ENCODE measurements at regions of chr1 and their contacts with region 1.

Region 1: DNA sequence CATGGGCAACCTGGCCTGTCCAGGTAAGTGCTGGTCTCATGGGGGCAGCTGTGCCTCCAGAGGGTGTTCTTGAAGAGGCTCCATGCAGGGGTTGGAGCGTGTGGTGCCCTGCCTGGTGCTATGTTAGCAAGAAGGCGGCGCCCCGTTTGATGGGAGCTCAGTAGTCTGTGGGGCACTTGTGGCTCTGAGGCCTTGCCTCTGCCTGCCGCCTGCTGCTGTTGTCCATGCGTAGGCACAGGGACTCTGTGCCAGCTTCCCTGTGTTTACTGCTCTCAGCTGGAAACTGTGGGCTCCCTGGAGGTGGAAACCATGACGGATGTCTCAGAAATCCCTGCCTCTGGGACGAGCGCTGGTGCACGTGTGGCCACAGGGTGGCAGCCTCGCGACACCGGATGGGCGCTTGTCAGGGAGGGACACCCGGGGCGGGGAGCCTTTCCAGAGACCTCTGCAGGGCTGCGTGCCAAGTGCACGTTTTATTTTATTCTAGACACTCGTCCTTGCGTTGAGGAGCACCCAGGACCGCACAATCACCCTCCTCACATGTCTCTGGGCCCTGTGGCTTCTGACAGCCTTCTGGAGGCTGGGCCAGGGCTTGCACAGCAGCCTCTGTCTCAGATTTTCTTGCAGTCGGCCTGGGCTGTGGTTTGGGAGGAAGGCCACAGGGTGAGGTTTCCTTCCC is 27.1 kb downstream of the SNAP47 start:
- DNase-seq: peak; percentile 96
- H3K4me3 Mint-ChIP-seq: peak overlapping the region; percentile 62
- H3K27ac Mint-ChIP-seq: peak overlapping the region; percentile 71
- H3K4me1 Mint-ChIP-seq: peaks cover 81% of the 10 kb centered on the region
- H3K27me3 Mint-ChIP-seq: no peaks in the 10 kb centered on the region

Region 2: DNA sequence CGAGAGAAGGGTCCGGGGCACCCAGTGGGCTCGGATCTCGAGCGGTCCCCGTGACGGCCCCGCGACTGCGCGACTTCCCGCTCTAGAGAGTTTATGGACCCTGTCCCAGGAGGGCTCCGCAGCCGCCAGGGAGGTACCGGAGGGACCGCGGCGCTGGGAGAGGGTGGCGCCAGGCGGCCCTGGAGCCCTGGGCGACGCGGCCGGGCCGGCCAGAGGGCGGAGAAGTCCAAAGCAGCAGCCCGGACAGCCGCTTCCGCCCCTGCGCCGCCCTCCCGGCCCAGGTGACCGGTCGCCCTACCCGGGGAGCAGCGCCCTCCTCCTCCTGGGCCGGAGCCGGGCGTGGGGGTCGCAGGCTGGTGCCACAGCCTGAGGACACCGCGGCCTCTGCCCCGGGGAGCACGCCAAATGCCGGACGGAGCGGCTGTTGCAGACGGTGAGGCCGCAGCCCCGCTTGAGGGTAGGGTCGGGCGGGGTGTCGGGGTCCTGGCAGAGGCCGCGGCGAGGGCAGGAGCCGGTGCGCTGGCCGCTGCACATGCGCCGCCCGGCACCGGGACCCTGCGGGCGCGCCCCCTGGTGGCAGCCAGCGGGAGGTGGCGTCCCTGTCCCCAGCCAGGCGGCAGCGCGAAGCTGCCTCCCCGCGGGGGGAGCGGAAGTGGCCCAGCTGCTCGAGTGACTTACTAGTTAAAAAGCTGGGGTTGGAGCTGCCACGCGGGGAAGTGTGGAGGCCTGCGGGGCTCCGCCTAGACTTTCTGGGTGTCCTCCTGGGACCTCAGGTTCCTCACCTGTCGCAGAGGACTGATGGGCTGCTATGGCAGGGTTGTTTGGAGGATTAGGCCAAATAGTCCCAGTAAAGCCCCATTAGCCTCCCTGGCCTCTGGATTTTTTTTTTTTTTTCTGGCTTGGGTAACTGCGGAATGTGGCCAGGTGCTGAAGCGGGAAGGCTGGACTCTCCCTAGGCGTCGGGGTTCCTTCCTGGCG is 219.9 kb before region 1 on chr1:
- intact Hi-C with region 1: no loop called
- DNase-seq: peak; percentile 97
- H3K4me3 Mint-ChIP-seq: peak overlapping the region; percentile 48
- H3K27ac Mint-ChIP-seq: peak overlapping the region; percentile 67
- H3K4me1 Mint-ChIP-seq: peaks cover 5% of the 10 kb centered on the region
- H3K27me3 Mint-ChIP-seq: peaks cover 5% of the 10 kb centered on the region

Region 3: GRCh38 chr1:227728059-227728891 is 34.1 kb before region 1 on chr1:
- intact Hi-C with region 1: loop called (anchors 1 kb)
- DNase-seq: peak; percentile 80
- H3K4me3 Mint-ChIP-seq: peak overlapping the region; percentile 87
- H3K27ac Mint-ChIP-seq: peak overlapping the region; percentile 71
- H3K4me1 Mint-ChIP-seq: peaks cover 17% of the 10 kb centered on the region
- H3K27me3 Mint-ChIP-seq: peaks cover 2% of the 10 kb centered on the region

Region 4: DNA sequence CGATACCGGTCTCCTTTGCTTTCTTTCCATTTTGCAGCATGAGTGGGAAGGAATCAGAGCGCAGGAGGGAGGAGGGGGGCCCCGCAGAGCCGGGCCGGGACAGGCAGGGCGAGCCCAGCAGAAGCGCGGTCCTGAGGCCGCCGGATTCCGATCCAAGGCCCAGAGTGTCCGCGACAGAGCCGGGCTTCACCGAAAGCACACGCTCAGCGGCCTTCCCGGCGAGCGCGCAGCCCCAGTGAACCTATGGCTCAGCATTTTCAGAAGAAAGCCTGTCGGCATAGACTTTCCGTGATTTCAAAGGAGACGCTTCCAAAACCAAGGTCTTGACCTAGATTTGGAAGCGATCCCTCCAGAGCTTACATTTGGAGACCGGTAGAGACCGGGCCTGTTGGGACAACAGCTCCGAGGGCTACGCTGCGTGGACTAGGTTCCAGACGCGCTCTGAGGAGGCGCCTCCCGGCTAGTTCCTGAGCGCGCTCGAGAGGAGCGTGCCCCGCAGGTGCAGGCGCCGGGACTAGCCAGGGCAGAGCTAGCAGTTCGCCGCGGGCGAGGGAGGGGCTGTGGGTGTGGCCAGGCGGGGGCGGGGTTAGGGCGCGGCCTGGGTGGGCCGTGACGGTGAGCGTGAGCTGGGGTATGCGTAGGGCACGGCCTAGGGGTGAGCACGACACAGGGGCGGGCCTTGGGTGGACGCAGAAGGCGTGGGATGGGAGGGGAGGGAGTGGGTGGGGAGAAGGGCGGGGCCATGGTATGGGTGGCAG is 25.3 kb after region 1 on chr1:
- intact Hi-C with region 1: loop called (anchors 2 kb)
- DNase-seq: peak; percentile 96
- H3K4me3 Mint-ChIP-seq: peak overlapping the region; percentile 83
- H3K27ac Mint-ChIP-seq: peak overlapping the region; percentile 21
- H3K4me1 Mint-ChIP-seq: peaks cover 12% of the 10 kb centered on the region
- H3K27me3 Mint-ChIP-seq: peaks cover 9% of the 10 kb centered on the region

Region 5: DNA sequence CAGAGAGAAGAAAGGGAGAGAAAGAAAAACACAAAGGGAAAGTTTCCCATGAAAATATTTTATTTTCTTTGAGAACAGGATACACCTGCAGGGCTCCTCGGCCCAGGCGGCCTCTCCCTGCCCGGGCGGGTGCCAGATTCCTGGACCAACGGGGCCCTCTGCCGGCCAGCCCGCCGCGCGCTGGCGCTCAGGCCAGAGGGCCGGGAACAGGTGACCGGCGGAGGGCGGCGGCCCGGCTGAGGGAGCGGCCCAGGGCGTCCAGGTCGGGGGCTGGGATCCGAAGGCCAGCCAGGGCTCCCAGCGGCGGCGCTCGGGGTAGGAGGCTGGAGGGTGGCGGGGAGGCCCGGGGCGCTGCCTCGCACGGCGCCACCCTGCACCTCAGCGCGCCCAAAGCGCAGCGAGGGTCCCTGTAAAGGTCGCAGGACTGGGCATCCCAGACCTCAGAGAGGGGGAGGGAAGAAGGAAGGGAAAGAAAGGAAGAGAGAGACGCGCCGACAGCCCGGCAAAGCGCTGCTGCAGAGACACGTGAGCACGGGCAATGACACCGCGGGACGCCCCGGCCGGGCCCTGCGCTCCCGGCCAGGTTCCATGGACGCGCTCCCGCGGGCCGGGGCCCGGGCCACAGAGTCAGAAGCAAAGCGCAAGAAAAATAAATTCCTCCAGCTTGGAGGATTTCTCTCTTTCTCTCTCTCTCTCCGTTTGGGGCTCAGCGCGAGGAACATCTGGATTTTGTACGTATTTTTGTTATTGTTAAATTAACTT is 184.4 kb after region 1 on chr1:
- intact Hi-C with region 1: loop called (anchors 1 kb)
- DNase-seq: peak; percentile 87
- H3K4me3 Mint-ChIP-seq: peak overlapping the region; percentile 75
- H3K27ac Mint-ChIP-seq: no peak overlapping the region
- H3K4me1 Mint-ChIP-seq: no peaks in the 10 kb centered on the region
- H3K27me3 Mint-ChIP-seq: peaks cover 30% of the 10 kb centered on the region

Region 6: DNA sequence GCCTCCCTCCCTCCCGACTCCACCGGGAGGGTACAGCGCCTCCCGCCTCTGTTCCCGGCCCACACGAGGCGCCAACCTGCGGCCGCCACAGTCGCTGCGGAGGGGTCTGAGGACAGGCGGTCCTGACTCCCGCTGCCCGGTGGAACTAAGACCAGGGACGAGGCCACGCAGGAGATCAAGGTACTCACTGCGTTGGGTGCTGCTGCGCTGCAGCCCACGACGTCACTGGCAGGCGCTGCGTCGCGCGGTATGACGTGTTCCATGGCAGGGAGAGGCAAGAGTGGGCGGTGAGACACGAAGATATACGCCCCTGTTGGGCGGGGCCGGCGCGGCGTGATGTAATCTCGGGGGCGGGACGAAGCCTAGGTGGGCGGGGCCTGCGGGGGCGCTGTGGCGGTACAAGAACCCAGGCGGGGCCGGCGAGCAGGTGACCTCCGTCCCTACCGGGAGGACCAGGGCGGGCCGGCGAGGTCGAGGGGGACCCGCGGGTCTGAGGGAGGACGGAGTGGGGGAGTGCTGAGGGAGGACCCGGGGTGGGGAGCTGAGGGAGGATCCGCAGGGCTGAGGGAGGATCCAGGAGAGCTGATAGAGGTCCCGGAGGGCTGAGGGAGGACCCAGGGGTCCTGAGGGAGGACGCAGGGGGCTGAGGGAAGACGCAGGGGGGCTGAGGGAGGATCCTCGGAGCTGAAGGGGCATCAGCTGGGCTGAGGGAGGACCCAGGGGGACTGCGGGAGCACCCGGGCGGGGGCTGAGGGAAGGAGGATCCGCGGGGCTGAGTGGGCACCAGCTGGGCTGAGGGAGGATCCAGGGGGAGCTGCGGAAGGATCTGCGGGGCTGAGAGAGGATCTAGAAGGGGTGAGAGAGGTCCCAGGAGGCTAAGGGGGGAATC is 346.9 kb after region 1 on chr1 and contains the start of gene MRPL55:
- intact Hi-C with region 1: loop called (anchors 10 kb)
- DNase-seq: peak; percentile 100
- H3K4me3 Mint-ChIP-seq: peak within 1 kb of the TSS; percentile 95
- H3K27ac Mint-ChIP-seq: peak within 1 kb of the TSS; percentile 88
- H3K4me1 Mint-ChIP-seq: peaks cover 23% of the 10 kb centered on the region
- H3K27me3 Mint-ChIP-seq: peaks cover 2% of the 10 kb centered on the region
- total RNA-seq, gene MRPL55: 55.2 and 62.2 TPM in 2 replicates

Measured in activated CD4-positive, alpha-beta T cell treated with anti-CD3 and anti-CD28 coated beads, Interleukin-2, amount 10 ng/mL, durations not matched to agents 24 days and 14 days (primary cell).